A549 (cell line): ENCODE measurements at regions of chr5 and their contacts with region 1.

Region 1: DNA sequence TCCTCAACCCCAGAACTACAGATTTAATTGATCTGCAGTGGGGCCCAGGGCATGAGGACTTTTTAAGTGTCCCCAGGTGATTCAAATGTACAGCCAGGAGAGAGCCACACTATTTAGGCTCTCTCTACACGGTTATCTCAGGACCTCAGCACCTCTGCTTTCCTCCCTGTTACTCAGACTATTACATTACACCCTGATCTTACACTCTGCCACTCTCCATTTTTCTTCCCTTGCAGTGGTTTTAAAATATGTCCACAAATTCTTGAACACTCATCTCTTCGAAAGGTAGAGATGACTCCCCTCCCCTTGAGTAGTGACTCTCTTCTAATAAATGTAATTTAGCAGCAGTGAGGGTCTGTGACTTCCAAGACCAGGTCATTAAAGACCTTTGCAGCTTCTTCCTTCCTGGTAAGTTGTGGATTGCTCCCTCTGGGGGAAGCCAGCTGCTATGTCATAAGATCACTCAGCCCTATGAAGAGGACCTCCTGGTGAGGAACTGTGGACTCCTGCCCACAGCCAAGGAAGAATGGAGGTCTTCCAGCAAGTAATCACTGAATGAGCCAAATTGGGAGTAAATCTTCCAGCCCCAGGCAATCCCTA is 87.5 kb upstream of the SSBP2 start:
- DNase-seq: peak in 1 of 2 experiments; percentile 62
- ATAC-seq: peak; percentile 95 to 98
- H3K4me3 ChIP-seq: no peak overlapping the region
- H3K27ac ChIP-seq: peak overlapping the region in 1 of 2 experiments; percentile 29; a peak in 2 of 6 replicates
- H3K4me1 ChIP-seq: 0 out of 3 replicates have a peak, but pooled peaks cover 8% of the 10 kb centered on the region
- CTCF ChIP-seq: peak; percentile 50
- EP300 ChIP-seq: no peak
- POLR2A ChIP-seq: no peak
- RAD21 ChIP-seq: peak; percentile 56 to 63

Region 2: DNA sequence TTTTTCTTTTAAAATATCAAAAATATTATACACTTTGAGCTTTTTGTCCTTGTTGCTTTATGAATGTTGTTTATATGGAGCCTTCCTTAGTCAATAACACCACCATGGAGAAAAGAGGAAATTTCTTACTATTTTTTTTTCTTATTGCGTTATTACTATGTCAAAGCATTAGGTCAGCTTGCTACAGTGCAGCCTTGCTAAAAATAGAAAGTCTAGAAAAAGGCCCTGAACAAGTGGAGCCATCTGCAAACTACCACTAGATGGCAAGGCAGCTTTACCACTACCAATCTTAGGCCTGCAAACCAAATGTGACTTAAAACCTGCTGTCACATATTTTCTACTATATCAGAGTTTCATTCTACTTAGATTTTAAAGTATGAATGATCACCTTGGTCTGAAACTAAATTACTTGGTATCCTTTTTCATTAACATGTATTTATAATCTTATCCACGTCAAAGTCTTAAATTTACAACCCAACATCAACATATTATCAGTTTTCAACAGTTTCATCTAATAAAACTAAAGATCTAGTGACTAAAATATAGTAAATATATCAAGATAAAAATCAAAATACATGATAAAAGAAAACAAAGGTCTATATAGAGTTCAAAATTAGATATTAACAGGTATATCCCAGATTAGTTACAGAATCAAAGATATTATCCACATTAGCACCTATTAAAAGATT is 331.4 kb before region 1 on chr5:
- CTCF ChIA-PET with region 1: interaction called, 14 read pairs
- POLR2A ChIA-PET with region 1: no interaction called
- DNase-seq: peak; percentile 66 to 88
- ATAC-seq: peak; percentile 99 to 100
- H3K4me3 ChIP-seq: no peak overlapping the region
- H3K27ac ChIP-seq: no peak overlapping the region; a peak in 1 of 6 replicates
- H3K4me1 ChIP-seq: peaks cover 6% of the 10 kb centered on the region; the same call in 2 of the 3 replicates
- CTCF ChIP-seq: peak; percentile 93
- EP300 ChIP-seq: no peak
- POLR2A ChIP-seq: no peak
- RAD21 ChIP-seq: peak; percentile 92 to 93

Region 3: DNA sequence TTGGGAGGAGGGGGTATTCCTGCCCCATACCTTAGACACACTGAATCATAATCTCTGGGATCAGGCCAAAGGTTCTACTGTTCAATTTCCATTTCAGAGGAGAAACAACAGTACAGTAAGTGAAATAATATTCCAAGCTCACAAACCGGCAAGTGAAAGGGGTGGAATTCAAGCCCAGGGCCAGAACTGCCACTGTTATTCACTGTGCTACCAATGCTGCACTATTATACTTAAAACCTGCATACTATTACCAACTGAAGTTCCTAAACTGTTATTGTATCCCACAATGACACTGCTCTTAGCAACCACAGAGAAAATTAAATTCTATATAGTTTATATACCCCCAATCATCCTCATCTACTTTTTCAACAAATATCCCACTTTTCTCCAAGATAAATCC is 112.1 kb before region 1 on chr5:
- CTCF ChIA-PET with region 1: no interaction called
- POLR2A ChIA-PET with region 1: no interaction called
- DNase-seq: no peak
- ATAC-seq: no peak
- H3K4me3 ChIP-seq: no peak overlapping the region
- H3K27ac ChIP-seq: no peak overlapping the region
- H3K4me1 ChIP-seq: no peaks in the 10 kb centered on the region
- CTCF ChIP-seq: no peak
- EP300 ChIP-seq: no peak
- POLR2A ChIP-seq: no peak
- RAD21 ChIP-seq: no peak

Region 4: DNA sequence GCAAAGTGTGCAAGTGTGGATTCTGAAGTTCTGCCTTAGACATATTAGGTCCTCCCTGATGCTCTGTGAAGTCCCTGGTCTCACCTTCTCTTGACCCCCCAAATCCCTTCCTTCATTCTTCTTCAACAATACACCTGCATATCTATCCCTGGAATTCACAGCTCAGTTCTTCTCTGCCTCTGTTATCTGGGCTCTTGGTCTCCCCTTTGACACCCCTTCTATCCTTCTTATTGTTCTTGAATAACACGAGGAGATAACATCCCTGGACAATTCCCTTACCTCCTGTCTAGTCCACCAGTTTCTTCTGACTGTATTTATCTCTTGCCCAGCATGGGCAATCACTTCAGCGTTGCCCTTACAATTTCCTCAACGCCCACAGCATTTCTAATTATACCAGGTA is 28.6 kb after region 1 on chr5:
- CTCF ChIA-PET with region 1: no interaction called
- POLR2A ChIA-PET with region 1: no interaction called
- DNase-seq: no peak
- ATAC-seq: no peak
- H3K4me3 ChIP-seq: no peak overlapping the region
- H3K27ac ChIP-seq: no peak overlapping the region
- H3K4me1 ChIP-seq: no peaks in the 10 kb centered on the region
- CTCF ChIP-seq: no peak
- EP300 ChIP-seq: no peak
- POLR2A ChIP-seq: no peak
- RAD21 ChIP-seq: no peak